A549 (cell line): ENCODE measurements at regions of chrX and their contacts with region 1.

Region 1: GRCh38 chrX:151753313-151754041 is 18.9 kb downstream of the CNGA2 start:
- DNase-seq: peak; percentile 50 to 63
- ATAC-seq: peak; percentile 86 to 94
- H3K4me3 ChIP-seq: no peak overlapping the region
- H3K27ac ChIP-seq: peak overlapping the region; percentile 68 to 79
- H3K4me1 ChIP-seq: peaks cover 14% of the 10 kb centered on the region
- CTCF ChIP-seq: peak; percentile 72
- EP300 ChIP-seq: no peak
- POLR2A ChIP-seq: no peak
- RAD21 ChIP-seq: peak; percentile 91 to 95

Region 2: DNA sequence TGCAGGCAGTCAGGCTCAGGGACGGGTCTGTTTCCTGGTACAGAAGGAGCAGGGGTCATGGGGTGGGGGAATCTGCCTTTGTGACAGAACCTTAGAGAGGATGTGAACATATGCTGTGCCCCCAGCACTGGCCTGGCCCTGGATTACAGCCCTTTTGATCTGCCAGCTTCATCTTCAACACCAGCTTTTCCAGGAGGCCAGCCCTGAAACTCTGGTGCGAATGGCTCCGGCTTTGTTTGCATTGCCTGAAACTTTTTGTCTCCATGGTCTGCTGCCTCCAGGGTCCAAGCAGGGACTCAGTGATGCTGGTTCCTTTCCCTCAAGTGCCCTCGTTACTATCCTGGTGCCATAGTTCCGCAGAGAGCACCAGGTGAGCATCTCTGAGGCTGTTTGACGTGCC is 16.8 kb before region 1 on chrX:
- CTCF ChIA-PET with region 1: interaction called, 14 read pairs
- POLR2A ChIA-PET with region 1: no interaction called
- DNase-seq: no peak
- ATAC-seq: no peak
- H3K4me3 ChIP-seq: no peak overlapping the region
- H3K27ac ChIP-seq: no peak overlapping the region
- H3K4me1 ChIP-seq: no peaks in the 10 kb centered on the region
- CTCF ChIP-seq: no peak
- EP300 ChIP-seq: no peak
- POLR2A ChIP-seq: no peak
- RAD21 ChIP-seq: no peak

Region 3: GRCh38 chrX:151974336-151975227 is 221.1 kb after region 1 on chrX and contains the start of gene GABRE:
- CTCF ChIA-PET with region 1: interaction called, 11 read pairs
- POLR2A ChIA-PET with region 1: interaction called, 7 read pairs
- DNase-seq: peak in 1 of 2 experiments; percentile 52
- ATAC-seq: peak; percentile 68 to 79; a peak in 5 of 6 replicates
- H3K4me3 ChIP-seq: peak within 1 kb of the TSS; percentile 76
- H3K27ac ChIP-seq: peak within 1 kb of the TSS; percentile 96 to 97
- H3K4me1 ChIP-seq: peaks cover 38% of the 10 kb centered on the region
- CTCF ChIP-seq: no peak
- EP300 ChIP-seq: no peak
- POLR2A ChIP-seq: peak; percentile 95
- RAD21 ChIP-seq: 0 out of 5 replicates have a peak, but pooled peaks of 1 of the 2 experiments have one; percentile 14
- polyA plus RNA-seq, gene GABRE: 92.4 and 101 TPM in 2 replicates

Region 4: GRCh38 chrX:152632445-152633097 is 879.1 kb after region 1 on chrX:
- CTCF ChIA-PET with region 1: interaction called, 119 read pairs
- POLR2A ChIA-PET with region 1: interaction called, 3 read pairs
- DNase-seq: peak; percentile 14 to 26
- ATAC-seq: peak in 1 of 2 experiments; percentile 66; a peak in 3 of 6 replicates
- H3K4me3 ChIP-seq: no peak overlapping the region
- H3K27ac ChIP-seq: no peak overlapping the region
- H3K4me1 ChIP-seq: no peaks in the 10 kb centered on the region; the same call in 2 of the 3 replicates
- CTCF ChIP-seq: peak; percentile 58
- EP300 ChIP-seq: no peak
- POLR2A ChIP-seq: no peak
- RAD21 ChIP-seq: peak; percentile 69 to 71

Region 5: GRCh38 chrX:152641996-152642395 is 888.5 kb after region 1 on chrX:
- CTCF ChIA-PET with region 1: interaction called, 119 read pairs
- POLR2A ChIA-PET with region 1: no interaction called
- DNase-seq: peak in 1 of 2 experiments; percentile 21
- ATAC-seq: peak in 1 of 2 experiments; percentile 72; a peak in 3 of 6 replicates
- H3K4me3 ChIP-seq: no peak overlapping the region
- H3K27ac ChIP-seq: no peak overlapping the region
- H3K4me1 ChIP-seq: peaks cover 13% of the 10 kb centered on the region
- CTCF ChIP-seq: no peak
- EP300 ChIP-seq: no peak
- POLR2A ChIP-seq: no peak
- RAD21 ChIP-seq: peak in 1 of 2 experiments; percentile 35; a peak in 2 of 5 replicates

Region 6: DNA sequence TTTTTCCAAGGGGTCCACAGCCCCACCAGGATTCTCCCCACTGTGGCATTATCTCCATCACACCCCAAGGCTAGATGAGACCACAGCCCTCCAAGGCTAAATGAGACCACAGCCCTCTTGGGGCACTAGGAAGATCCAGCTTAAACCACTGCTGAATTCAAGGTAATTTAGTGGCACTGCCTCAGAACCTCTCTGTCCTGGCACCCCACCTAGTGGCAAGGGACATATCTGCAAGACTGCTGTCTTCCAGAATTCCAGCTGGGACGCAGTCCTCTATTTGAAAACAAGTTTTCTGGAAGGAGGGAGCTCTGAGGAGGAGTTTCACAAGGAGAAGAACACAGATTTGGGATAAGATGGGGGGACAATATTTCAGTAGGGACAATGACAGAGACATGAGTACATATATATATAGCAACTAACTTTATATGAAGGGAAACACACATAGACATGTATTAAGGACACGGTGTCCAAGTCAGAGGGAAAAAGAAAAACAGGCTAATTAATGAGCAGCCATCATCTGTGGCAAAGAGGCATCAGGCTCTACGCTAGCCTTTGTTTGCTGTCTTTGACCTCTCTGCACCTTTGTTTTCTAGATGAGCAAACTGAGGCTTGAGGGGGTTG is 1067.8 kb after region 1 on chrX:
- CTCF ChIA-PET with region 1: interaction called, 10 read pairs
- POLR2A ChIA-PET with region 1: no interaction called
- DNase-seq: peak; percentile 47 to 54
- ATAC-seq: peak; percentile 66 to 76; a peak in 4 of 6 replicates
- H3K4me3 ChIP-seq: no peak overlapping the region
- H3K27ac ChIP-seq: no peak overlapping the region
- H3K4me1 ChIP-seq: no peaks in the 10 kb centered on the region
- CTCF ChIP-seq: peak; percentile 56
- EP300 ChIP-seq: no peak
- POLR2A ChIP-seq: no peak
- RAD21 ChIP-seq: peak; percentile 59 to 67